K562 (cell line): ENCODE measurements at regions of chr7 and their contacts with region 1.

Region 1: DNA sequence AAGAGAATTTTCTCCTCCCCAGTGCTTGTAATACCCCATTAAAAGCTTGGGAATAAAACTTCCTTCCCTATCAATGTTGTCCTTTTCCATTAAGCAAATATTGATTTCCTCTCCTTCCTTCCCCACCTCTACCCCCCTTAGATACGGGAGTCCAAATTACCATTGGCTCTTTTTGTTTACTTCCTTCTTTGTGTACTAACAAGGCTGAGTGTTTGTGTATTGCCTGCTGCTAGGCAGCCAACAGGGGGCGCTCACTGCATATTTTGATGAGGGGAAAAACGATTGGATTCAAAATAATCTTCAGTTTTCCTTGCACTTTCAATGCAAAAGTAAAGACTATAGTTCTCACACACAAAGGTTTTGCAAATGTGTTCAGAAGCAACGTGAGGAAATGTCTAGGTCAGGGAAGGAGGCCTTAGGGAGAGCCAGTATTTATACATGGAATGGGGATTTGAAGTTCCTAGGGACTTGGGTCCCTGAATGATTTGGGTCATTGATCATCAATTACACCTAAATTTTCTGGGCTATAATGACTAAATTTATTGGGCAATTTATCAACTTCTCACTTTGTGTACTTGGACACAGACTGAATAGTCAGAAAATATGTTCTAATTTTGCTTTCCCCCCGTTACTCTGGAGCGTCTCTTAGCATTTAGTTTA is 23.6 kb upstream of the VPS41 start:
- DNase-seq: peak; percentile 42 to 74 (median 55)
- ATAC-seq: peak; percentile 75
- H3K4me3 ChIP-seq: no peak overlapping the region
- H3K27ac ChIP-seq: no peak overlapping the region
- H3K4me1 ChIP-seq: 0 out of 5 replicates have a peak, but pooled peaks cover 0 to 7% of the 10 kb centered on the region in 2 experiments
- H3K27me3 ChIP-seq: peaks cover 3 to 6% of the 10 kb centered on the region in 2 experiments; a peak in 2 of 5 replicates
- CTCF ChIP-seq: peak; percentile 67 to 89 (median 88)
- EP300 ChIP-seq: no peak
- POLR2A ChIP-seq: no peak
- RAD21 ChIP-seq: peak; percentile 79 to 84

Region 2: GRCh38 chr7:38796626-38797501 is 135.8 kb before region 1 on chr7:
- CTCF ChIA-PET with region 1: no interaction called
- POLR2A ChIA-PET with region 1: no interaction called
- in situ Hi-C with region 1: no loop called
- intact Hi-C with region 1: loop called (anchors 5 kb)
- DNase-seq: peak; percentile 25 to 64 (median 37)
- ATAC-seq: peak; percentile 69
- H3K4me3 ChIP-seq: no peak overlapping the region
- H3K27ac ChIP-seq: no peak overlapping the region
- H3K4me1 ChIP-seq: no peaks in the 10 kb centered on the region
- H3K27me3 ChIP-seq: no peaks in the 10 kb centered on the region
- CTCF ChIP-seq: peak; percentile 22 to 78 (median 65); a peak in 5 of 6 replicates
- EP300 ChIP-seq: no peak
- POLR2A ChIP-seq: no peak
- RAD21 ChIP-seq: peak; percentile 79 to 88

Region 3: GRCh38 chr7:38831259-38831996 is 101.2 kb before region 1 on chr7:
- CTCF ChIA-PET with region 1: no interaction called
- POLR2A ChIA-PET with region 1: no interaction called
- in situ Hi-C with region 1: no loop called
- intact Hi-C with region 1: no loop called
- DNase-seq: no peak
- ATAC-seq: no peak
- H3K4me3 ChIP-seq: no peak overlapping the region
- H3K27ac ChIP-seq: no peak overlapping the region
- H3K4me1 ChIP-seq: no peaks in the 10 kb centered on the region; a peak in 1 of 5 replicates
- H3K27me3 ChIP-seq: no peaks in the 10 kb centered on the region
- CTCF ChIP-seq: no peak
- EP300 ChIP-seq: no peak
- POLR2A ChIP-seq: no peak
- RAD21 ChIP-seq: no peak

Region 4: GRCh38 chr7:39085590-39086049 is 153.0 kb after region 1 on chr7:
- CTCF ChIA-PET with region 1: interaction called, 4 read pairs
- POLR2A ChIA-PET with region 1: no interaction called
- in situ Hi-C with region 1: no loop called
- intact Hi-C with region 1: loop called (anchors 10 kb)
- DNase-seq: peak in 1 of 4 experiments; percentile 6
- ATAC-seq: peak; percentile 66
- H3K4me3 ChIP-seq: no peak overlapping the region
- H3K27ac ChIP-seq: no peak overlapping the region
- H3K4me1 ChIP-seq: no peaks in the 10 kb centered on the region
- H3K27me3 ChIP-seq: peaks cover 2 to 4% of the 10 kb centered on the region in 2 experiments; a peak in 4 of 5 replicates
- CTCF ChIP-seq: no peak
- EP300 ChIP-seq: no peak
- POLR2A ChIP-seq: no peak
- RAD21 ChIP-seq: no peak

Region 5: GRCh38 chr7:39353615-39354376 is 421.2 kb after region 1 on chr7:
- CTCF ChIA-PET with region 1: interaction called, 5 read pairs
- POLR2A ChIA-PET with region 1: no interaction called
- in situ Hi-C with region 1: no loop called
- intact Hi-C with region 1: loop called (anchors 10 kb)
- DNase-seq: peak in 2 of 4 experiments; percentile 11 to 22
- ATAC-seq: peak; percentile 75
- H3K4me3 ChIP-seq: no peak overlapping the region
- H3K27ac ChIP-seq: no peak overlapping the region
- H3K4me1 ChIP-seq: no peaks in the 10 kb centered on the region
- H3K27me3 ChIP-seq: peaks cover 10% of the 10 kb centered on the region in 2 experiments; a peak in 2 of 5 replicates
- CTCF ChIP-seq: no peak
- EP300 ChIP-seq: no peak
- POLR2A ChIP-seq: no peak
- RAD21 ChIP-seq: no peak

Region 6: DNA sequence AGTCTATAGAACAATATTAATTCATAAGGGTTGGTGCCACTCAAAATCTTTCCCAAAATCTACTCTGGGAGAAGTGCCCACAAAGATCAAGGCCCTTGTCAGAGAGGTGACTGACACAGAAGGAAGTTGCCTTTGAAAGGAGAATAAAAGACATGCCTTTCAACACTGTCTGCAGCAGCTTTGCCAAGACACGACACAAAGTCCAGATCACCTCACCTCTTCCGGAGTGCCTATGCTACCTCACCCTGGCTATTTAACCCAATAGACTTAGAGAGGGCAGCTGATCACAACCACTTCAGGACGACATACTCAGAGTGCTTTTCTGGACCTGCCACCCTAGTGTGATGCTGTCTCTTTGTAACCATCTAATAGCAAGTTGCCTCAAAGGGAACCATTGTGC is 584.6 kb after region 1 on chr7:
- CTCF ChIA-PET with region 1: interaction called, 7 read pairs
- POLR2A ChIA-PET with region 1: no interaction called
- in situ Hi-C with region 1: no loop called
- intact Hi-C with region 1: loop called (anchors 1 kb)
- DNase-seq: no peak
- ATAC-seq: no peak
- H3K4me3 ChIP-seq: no peak overlapping the region
- H3K27ac ChIP-seq: no peak overlapping the region
- H3K4me1 ChIP-seq: no peaks in the 10 kb centered on the region; a peak in 1 of 5 replicates
- H3K27me3 ChIP-seq: peaks cover 8 to 22% of the 10 kb centered on the region in 2 experiments; a peak in 3 of 5 replicates
- CTCF ChIP-seq: no peak
- EP300 ChIP-seq: no peak
- POLR2A ChIP-seq: no peak
- RAD21 ChIP-seq: no peak